Activated CD4-positive, alpha-beta T cell treated with anti-CD3 and anti-CD28 coated beads for 36 hours (primary cell): ENCODE measurements at regions of chr17 and their contacts with region 1.

Region 1: GRCh38 chr17:41548844-41549595 is 20.9 kb upstream of the KRT19 start:
- DNase-seq: peak; percentile 93
- ATAC-seq: peak; percentile 81
- H3K4me3 Mint-ChIP-seq: no peak overlapping the region
- H3K27ac Mint-ChIP-seq: peak overlapping the region; percentile 42
- H3K4me1 Mint-ChIP-seq: peaks cover 22% of the 10 kb centered on the region
- H3K27me3 Mint-ChIP-seq: peaks cover 10% of the 10 kb centered on the region

Region 2: DNA sequence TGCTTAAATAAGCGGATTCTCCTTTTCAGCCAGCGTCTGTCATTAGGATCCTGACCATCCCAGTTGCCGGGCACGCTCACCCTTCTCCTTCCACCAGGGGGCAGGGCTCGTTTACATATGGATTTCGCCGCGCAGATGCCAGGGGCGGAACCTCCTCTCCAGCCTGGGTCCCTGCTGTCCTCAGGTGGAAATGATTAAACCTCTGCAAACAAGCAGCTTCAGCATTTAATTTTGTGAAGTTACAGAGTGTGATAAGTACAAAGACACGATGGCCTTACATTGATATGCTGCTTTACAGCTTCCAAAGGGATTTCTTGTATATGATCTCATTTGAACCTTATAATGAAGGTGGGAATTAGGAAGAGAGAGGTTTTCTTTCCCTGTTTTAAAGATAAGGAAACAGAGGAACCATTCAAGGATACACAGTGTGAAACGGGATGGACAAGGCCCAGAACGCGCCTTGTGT is 745.4 kb before region 1 on chr17:
- CTCF ChIA-PET with region 1: interaction called, 3 read pairs
- POLR2A ChIA-PET with region 1: no interaction called
- intact Hi-C with region 1: loop called in 1 of 2 experiments (anchors 2 kb)
- DNase-seq: peak; percentile 89
- ATAC-seq: peak; percentile 93
- H3K4me3 Mint-ChIP-seq: no peak overlapping the region
- H3K27ac Mint-ChIP-seq: no peak overlapping the region
- H3K4me1 Mint-ChIP-seq: peaks cover 2% of the 10 kb centered on the region
- H3K27me3 Mint-ChIP-seq: peaks cover 30% of the 10 kb centered on the region

Region 3: DNA sequence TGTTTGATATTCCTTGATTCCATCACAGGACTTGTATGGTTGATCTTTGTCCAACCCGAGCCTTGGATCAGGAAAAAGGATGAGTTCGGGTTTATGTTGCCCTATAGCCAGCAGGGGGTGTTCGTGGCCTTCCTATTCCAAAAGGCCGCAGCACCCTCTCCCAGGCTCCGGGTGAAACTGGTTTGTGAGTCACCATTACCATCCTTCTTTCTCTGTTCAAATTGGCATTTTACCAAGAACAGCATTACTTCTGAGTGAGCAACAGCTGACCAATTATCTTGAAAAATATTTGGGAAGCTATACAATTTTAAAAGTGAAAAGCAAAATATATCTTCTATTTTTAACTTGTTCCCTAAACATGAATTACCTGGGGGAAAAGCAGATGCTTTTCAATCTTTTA is 639.7 kb before region 1 on chr17:
- CTCF ChIA-PET with region 1: interaction called, 11 read pairs
- POLR2A ChIA-PET with region 1: no interaction called
- intact Hi-C with region 1: loop called (anchors 1 kb)
- DNase-seq: peak; percentile 79
- ATAC-seq: peak; percentile 94
- H3K4me3 Mint-ChIP-seq: no peak overlapping the region
- H3K27ac Mint-ChIP-seq: no peak overlapping the region
- H3K4me1 Mint-ChIP-seq: no peaks in the 10 kb centered on the region
- H3K27me3 Mint-ChIP-seq: peaks cover 31% of the 10 kb centered on the region

Region 4: GRCh38 chr17:41486809-41487720 is 62.0 kb before region 1 on chr17:
- CTCF ChIA-PET with region 1: interaction called, 5 read pairs
- POLR2A ChIA-PET with region 1: no interaction called
- intact Hi-C with region 1: loop called in 1 of 2 experiments (anchors 1 kb)
- DNase-seq: peak; percentile 73
- ATAC-seq: peak; percentile 44
- H3K4me3 Mint-ChIP-seq: no peak overlapping the region
- H3K27ac Mint-ChIP-seq: no peak overlapping the region
- H3K4me1 Mint-ChIP-seq: peaks cover 8% of the 10 kb centered on the region
- H3K27me3 Mint-ChIP-seq: no peaks in the 10 kb centered on the region

Region 5: DNA sequence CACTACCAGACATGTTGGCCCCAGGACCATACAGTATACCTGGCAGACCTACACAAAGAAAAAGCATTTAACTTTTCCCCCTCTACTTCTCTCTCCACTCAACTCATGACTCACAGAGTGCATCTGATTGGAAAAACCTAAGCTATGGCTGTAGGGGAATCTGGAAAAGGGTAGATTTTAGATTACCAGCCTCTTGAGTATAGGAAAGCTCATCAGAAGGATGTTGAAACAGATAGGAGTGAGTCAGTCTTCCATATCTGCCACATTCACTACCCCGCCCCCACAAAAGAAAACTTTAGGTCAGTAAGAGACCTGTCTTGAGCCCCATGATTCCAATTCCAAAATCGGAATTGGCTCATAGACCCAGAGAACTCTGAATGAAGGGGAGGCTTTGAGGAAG is 10.5 kb after region 1 on chr17:
- CTCF ChIA-PET with region 1: interaction called, 38 read pairs
- POLR2A ChIA-PET with region 1: no interaction called
- intact Hi-C with region 1: no loop called
- DNase-seq: no peak
- ATAC-seq: no peak
- H3K4me3 Mint-ChIP-seq: no peak overlapping the region
- H3K27ac Mint-ChIP-seq: no peak overlapping the region
- H3K4me1 Mint-ChIP-seq: no peaks in the 10 kb centered on the region
- H3K27me3 Mint-ChIP-seq: peaks cover 30% of the 10 kb centered on the region

Region 6: DNA sequence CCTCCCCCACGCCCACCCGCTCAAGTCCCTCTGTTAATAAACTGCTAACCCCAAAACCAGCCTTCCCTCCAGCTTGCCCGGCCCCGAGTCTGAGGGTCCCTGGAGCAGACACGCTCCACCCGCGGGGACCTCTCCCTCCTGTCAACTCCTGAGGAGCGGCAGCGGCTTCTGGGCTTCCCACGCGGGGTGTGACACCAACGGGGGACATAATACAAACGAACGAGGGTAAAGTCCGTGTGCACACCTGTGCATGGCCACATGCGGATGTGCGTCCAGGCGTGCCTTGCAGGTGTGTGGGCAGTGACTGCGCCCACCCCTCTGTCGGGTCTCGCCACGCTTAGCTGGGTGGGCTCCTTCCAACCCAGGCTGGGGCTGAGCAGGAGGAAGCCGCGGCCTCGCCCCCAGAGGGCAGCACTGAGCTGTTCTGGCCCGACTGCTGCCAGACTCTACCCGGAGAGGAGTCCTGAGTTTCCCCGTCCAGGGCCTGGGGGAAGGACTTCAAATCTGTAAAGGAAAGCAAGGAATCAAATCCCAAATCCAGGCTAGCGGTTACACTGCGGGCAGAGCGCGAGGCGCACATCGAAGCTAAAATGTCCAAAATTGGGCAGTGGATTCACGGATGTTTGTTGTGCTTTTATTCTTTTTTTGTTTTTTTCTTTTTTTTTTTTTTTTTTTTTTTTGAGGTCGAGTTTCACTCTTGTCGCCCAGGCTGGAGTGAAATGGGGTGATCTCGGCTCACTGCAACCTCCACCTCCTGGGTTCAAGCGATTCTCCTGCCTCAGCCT is 99.6 kb after region 1 on chr17:
- CTCF ChIA-PET with region 1: interaction called, 73 read pairs
- POLR2A ChIA-PET with region 1: interaction called, 4 read pairs
- intact Hi-C with region 1: loop called (anchors 1 kb)
- DNase-seq: peak; percentile 92
- ATAC-seq: peak; percentile 91
- H3K4me3 Mint-ChIP-seq: peak overlapping the region; percentile 50
- H3K27ac Mint-ChIP-seq: peak overlapping the region; percentile 66
- H3K4me1 Mint-ChIP-seq: peaks cover 9% of the 10 kb centered on the region
- H3K27me3 Mint-ChIP-seq: no peaks in the 10 kb centered on the region

Region 7: DNA sequence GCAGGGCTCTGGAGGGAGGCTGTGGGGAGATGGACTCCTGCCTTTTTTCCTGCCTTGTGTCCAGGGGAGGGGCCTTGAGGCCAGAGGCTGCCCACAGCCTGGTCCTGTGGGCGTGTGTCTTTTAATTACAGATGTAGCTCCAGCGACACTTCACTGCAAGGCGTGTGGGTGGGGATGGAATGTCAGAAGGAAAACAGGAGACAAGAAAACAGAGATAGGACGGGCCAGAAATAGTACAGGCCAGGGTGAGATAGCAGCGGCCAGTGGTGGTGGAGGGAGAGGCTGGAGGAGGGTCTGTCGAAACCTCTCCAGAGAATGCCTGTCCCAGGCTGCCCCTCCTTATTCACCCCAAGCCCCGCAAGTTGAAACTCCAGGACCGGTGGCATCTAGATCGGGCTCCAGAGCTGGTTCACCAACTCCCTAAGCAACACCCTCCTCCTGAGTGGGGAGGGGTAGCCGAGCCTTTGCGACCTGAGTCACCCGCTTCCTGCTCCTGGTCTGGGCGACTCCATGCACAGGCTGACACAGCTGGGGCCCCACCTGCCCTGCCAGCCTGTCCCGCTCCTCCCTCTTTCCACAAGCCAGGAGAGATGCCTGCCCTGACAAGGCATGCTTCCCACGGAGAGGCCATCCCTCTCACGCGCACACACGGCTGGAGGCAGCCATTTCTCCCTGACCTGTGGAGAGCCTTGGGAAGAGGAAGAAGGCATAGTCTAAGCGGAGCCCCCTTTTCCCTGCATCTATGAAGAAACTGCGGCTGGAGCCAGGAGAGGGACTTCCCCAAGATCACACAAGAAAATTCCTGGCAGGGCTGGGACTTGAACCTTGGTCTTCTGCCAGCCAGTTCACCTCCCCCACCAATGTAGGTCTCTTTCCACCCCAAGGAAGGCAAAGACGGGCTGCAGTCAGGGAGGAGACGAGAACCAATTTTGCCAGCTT is 244.1 kb after region 1 on chr17:
- CTCF ChIA-PET with region 1: no interaction called
- POLR2A ChIA-PET with region 1: no interaction called
- intact Hi-C with region 1: no loop called
- DNase-seq: peak; percentile 53
- ATAC-seq: peak; percentile 84
- H3K4me3 Mint-ChIP-seq: no peak overlapping the region
- H3K27ac Mint-ChIP-seq: no peak overlapping the region
- H3K4me1 Mint-ChIP-seq: peaks cover 10% of the 10 kb centered on the region
- H3K27me3 Mint-ChIP-seq: peaks cover 3% of the 10 kb centered on the region